ENCODE measurements at regions of chr5 and their contacts with region 1.

Region 1: DNA sequence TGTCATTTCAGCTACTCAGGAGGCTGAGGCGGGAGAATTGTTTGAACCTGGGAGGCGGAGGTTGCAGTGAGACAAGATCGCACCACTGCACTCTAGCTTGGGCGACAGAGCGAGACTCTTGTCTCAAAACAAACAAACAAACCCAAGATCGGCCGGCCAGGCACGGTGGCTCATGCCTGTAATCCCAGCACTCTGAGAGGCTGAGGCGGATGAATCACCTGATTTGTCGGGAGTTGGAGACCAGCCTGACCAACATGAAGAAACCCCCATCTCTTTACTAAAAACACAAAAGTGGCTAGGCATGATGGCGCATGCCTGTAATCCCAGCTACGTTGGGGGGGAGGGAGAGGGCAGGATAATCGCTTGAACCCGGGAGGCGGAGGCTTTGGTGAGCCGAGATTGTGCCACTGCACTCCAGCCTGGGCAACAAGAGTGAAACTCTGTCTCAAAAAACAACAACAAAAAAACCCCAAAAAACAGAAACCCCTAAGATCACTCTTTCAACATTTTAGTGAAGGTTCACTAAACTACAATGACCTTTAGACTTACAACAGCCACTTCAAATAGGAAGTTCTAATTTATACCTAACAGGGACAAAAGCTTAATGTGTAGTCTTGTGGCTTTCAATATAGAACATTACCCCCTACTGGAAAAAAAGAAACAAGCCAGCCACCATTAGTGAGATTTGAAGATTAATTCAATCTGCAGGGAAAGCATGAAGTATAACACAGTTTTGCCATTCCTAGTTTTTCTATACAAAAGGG is 7.0 kb downstream of the HSPA9 start:
- DNase-seq: no peak
- H3K4me3 ChIP-seq: no peak overlapping the region
- H3K4me3 Mint-ChIP-seq: peak overlapping the region in 1 of 8 donors; percentile 28
- H3K27ac ChIP-seq: no peak overlapping the region
- H3K27ac Mint-ChIP-seq: peak overlapping the region; percentile 36 to 99 (median 76)
- H3K4me1 ChIP-seq: peaks cover 69% of the 10 kb centered on the region
- H3K4me1 Mint-ChIP-seq: peaks cover 42 to 76% (median 57%) of the 10 kb centered on the region in 4 donors
- H3K27me3 ChIP-seq: no peaks in the 10 kb centered on the region
- H3K27me3 Mint-ChIP-seq: no peaks in the 10 kb centered on the region

Region 2: GRCh38 chr5:138552700-138553099 is 15.5 kb before region 1 on chr5:
- CTCF ChIA-PET with region 1: interaction called, 15 read pairs
- POLR2A ChIA-PET with region 1: interaction called, 12 read pairs
- intact Hi-C with region 1: no loop called
- DNase-seq: no peak
- H3K4me3 ChIP-seq: no peak overlapping the region
- H3K4me3 Mint-ChIP-seq: no peak overlapping the region
- H3K27ac ChIP-seq: no peak overlapping the region
- H3K27ac Mint-ChIP-seq: peak overlapping the region in 3 of 7 donors; percentile 6 to 69 (median 29)
- H3K4me1 ChIP-seq: peaks cover 13% of the 10 kb centered on the region
- H3K4me1 Mint-ChIP-seq: peaks cover 19 to 30% (median 21%) of the 10 kb centered on the region in 4 donors
- H3K27me3 ChIP-seq: no peaks in the 10 kb centered on the region
- H3K27me3 Mint-ChIP-seq: no peaks in the 10 kb centered on the region